T-cell (primary cell): ENCODE measurements at regions of chr3 and their contacts with region 1.

Region 1: DNA sequence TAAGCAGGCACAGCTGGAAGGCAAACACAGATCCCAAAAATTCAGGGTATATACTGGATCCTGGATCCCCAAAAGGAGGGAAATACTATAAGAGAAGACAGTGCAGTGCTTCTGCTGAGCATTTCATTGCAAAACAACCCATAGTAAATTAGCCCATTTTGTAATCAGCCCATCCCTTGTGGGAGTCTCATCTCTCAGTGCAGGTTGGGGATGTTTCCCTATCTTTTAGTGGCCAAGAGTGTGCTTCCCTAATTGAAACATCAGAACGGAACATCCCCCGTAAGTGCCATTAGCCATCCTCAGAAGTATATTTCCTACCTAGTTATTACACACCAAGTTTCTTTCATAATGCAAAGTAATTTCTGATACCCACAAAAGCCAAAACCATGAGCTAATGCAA is 11.2 kb upstream of the MTMR14 start:
- DNase-seq: no peak
- ATAC-seq: no peak
- H3K4me3 ChIP-seq: no peak overlapping the region
- H3K4me3 Mint-ChIP-seq: no peak overlapping the region
- H3K27ac ChIP-seq: no peak overlapping the region
- H3K27ac Mint-ChIP-seq: no peak overlapping the region
- H3K4me1 ChIP-seq: no peaks in the 10 kb centered on the region
- H3K4me1 Mint-ChIP-seq: peaks cover 0 to 3% (median 0%) of the 10 kb centered on the region in 3 donors
- H3K27me3 ChIP-seq: peaks cover 0 to 7% of the 10 kb centered on the region in 2 experiments
- H3K27me3 Mint-ChIP-seq: peaks cover 3 to 17% of the 10 kb centered on the region in 2 donors

Region 2: DNA sequence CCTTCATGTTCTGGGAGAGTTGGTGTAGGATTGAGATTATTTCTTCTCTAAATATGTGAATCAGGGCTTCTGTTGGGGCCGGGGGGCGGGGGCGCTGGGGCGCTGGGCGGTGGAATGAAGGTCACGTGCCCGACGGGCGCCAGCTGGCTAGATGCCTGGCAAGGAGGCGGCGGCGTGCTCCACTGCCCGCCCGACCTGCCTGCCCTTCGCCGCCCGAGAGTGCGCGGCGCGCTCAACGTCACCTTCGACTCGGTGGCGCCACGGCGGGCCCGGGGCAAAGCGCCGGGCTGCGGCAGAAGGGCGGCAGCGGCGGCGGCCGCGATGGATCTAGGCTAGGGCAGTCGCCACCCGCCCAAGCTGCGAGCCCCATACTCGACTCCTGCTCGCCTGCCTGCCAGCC is 37.6 kb before region 1 on chr3:
- CTCF ChIA-PET with region 1: no interaction called
- POLR2A ChIA-PET with region 1: interaction called in 1 of 2 experiments, 13 read pairs
- DNase-seq: peak in 3 of 35 experiments; percentile 1 to 3 (median 3)
- ATAC-seq: peak in 2 of 4 experiments; percentile 23 to 33
- H3K4me3 ChIP-seq: peak overlapping the region in 1 of 2 donors; percentile 12
- H3K4me3 Mint-ChIP-seq: peak overlapping the region; percentile 4 to 47 (median 39)
- H3K27ac ChIP-seq: no peak overlapping the region
- H3K27ac Mint-ChIP-seq: no peak overlapping the region
- H3K4me1 ChIP-seq: peaks cover 0 to 2% of the 10 kb centered on the region in 2 experiments
- H3K4me1 Mint-ChIP-seq: peaks cover 2 to 5% (median 5%) of the 10 kb centered on the region in 3 donors
- H3K27me3 ChIP-seq: peaks cover 5 to 38% of the 10 kb centered on the region in 2 experiments
- H3K27me3 Mint-ChIP-seq: peaks cover 43 to 55% of the 10 kb centered on the region in 2 donors

Region 3: GRCh38 chr3:9615003-9615625 is 23.0 kb before region 1 on chr3:
- CTCF ChIA-PET with region 1: no interaction called
- POLR2A ChIA-PET with region 1: no interaction called
- DNase-seq: no peak
- ATAC-seq: no peak
- H3K4me3 ChIP-seq: no peak overlapping the region
- H3K4me3 Mint-ChIP-seq: no peak overlapping the region
- H3K27ac ChIP-seq: no peak overlapping the region
- H3K27ac Mint-ChIP-seq: no peak overlapping the region
- H3K4me1 ChIP-seq: no peaks in the 10 kb centered on the region
- H3K4me1 Mint-ChIP-seq: no peaks in the 10 kb centered on the region
- H3K27me3 ChIP-seq: peaks cover 2 to 26% of the 10 kb centered on the region in 2 experiments
- H3K27me3 Mint-ChIP-seq: peaks cover 25 to 37% of the 10 kb centered on the region in 2 donors

Region 4: GRCh38 chr3:9897408-9898372 is 259.5 kb after region 1 on chr3:
- CTCF ChIA-PET with region 1: no interaction called
- POLR2A ChIA-PET with region 1: no interaction called
- DNase-seq: no peak
- ATAC-seq: no peak
- H3K4me3 ChIP-seq: no peak overlapping the region
- H3K4me3 Mint-ChIP-seq: no peak overlapping the region
- H3K27ac ChIP-seq: no peak overlapping the region
- H3K27ac Mint-ChIP-seq: peak overlapping the region; percentile 58 to 73
- H3K4me1 ChIP-seq: peaks cover 8 to 18% of the 10 kb centered on the region in 2 experiments
- H3K4me1 Mint-ChIP-seq: peaks cover 44 to 61% (median 47%) of the 10 kb centered on the region in 3 donors
- H3K27me3 ChIP-seq: peaks cover 0 to 2% of the 10 kb centered on the region in 2 experiments
- H3K27me3 Mint-ChIP-seq: no peaks in the 10 kb centered on the region